GM18951 (cell line): ENCODE measurements at regions of chr10 and their contacts with region 1.

Region 1: DNA sequence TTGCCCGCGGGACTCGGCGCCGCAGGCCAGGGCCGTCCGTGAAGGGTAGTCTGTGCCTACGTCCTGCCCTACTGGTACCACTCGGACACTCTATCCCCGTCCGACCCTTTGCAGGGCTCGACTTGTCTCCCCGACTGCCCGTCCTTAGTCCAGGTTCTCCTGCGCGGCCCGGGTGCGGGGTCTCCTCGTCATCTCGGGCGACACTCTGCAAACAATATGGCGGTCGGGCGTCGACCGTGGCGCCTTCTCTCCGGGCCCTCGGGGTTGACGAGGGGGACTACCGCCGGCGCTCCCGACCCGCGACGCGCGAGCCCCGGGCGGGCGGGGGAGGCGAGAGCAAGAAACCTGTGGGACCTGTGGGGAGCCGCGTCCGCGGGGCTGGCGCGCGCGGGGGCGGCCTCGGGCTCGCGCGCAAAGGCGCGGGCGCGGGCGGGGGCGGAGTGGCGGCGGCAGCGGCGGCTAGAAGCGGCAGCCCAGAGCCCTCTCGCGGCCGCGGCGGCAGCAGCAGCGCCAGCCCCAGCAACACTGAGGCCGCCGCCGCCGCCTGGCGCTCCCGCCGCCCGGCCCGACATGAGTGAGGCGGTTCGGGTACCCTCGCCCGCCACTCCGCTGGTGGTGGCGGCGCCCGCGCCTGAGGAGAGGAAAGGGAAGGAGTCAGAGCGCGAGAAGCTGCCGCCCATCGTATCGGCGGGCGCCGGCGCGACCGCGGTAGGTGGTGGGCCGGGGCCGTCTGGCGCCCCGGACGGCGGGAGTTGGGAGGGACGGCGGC is at the start of gene HECTD2:
- POLR2A ChIP-seq: peak; percentile 65

Region 2: GRCh38 chr10:90885176-90885575 is 524.9 kb before region 1 on chr10:
- in situ Hi-C with region 1: loop called (anchors 25 kb)
- POLR2A ChIP-seq: no peak